Activated CD4-positive, alpha-beta memory T cell treated with anti-CD3 and anti-CD28 coated beads for 36 hours (primary cell): ENCODE measurements at regions of chr10 and their contacts with region 1.

Region 1: DNA sequence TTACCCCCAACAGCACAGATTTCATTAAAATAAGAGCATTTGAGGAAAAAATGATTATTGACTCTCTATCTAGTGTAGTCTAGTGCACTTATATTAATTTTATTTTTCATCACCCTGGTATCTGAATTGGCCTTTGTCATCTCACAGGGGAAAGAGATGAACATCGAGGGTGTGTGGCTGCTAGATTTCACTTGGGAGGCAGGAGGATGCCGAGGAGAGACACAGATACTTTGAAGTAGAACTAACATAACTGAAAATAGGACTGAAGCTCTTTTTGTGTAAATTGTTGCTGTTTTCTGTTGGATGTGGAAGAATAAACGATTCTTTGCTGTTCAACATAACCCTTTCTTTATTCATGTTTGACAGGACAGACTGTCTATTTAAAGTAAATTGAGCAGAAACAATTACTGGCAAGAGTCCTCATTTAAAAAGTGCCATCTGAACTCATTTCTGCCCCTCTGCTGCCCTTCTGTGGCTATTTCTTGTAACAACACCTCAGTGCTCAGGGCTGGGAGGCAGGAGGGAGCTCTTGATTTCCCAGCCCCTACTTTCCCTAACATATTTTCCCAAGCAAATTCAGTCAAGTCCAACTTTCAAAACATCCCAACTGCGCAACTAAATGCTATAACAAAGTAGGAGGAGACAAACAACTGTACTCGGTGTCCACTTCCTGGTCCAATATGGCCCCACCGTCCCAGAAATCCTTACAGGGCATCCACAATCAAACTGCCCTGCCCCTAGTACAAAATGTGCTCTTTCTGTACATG is 15.6 kb downstream of the LYZL1 start:
- DNase-seq: peak; percentile 43
- H3K4me3 Mint-ChIP-seq: no peak overlapping the region
- H3K27ac Mint-ChIP-seq: no peak overlapping the region
- H3K4me1 Mint-ChIP-seq: no peaks in the 10 kb centered on the region
- H3K27me3 Mint-ChIP-seq: peaks cover 21% of the 10 kb centered on the region

Region 2: GRCh38 chr10:28628184-28628893 is 676.1 kb before region 1 on chr10:
- CTCF ChIA-PET with region 1: interaction called, 13 read pairs
- POLR2A ChIA-PET with region 1: no interaction called
- intact Hi-C with region 1: loop called (anchors 1 kb)
- DNase-seq: peak; percentile 80
- H3K4me3 Mint-ChIP-seq: no peak overlapping the region
- H3K27ac Mint-ChIP-seq: no peak overlapping the region
- H3K4me1 Mint-ChIP-seq: peaks cover 4% of the 10 kb centered on the region
- H3K27me3 Mint-ChIP-seq: peaks cover 9% of the 10 kb centered on the region

Region 3: DNA sequence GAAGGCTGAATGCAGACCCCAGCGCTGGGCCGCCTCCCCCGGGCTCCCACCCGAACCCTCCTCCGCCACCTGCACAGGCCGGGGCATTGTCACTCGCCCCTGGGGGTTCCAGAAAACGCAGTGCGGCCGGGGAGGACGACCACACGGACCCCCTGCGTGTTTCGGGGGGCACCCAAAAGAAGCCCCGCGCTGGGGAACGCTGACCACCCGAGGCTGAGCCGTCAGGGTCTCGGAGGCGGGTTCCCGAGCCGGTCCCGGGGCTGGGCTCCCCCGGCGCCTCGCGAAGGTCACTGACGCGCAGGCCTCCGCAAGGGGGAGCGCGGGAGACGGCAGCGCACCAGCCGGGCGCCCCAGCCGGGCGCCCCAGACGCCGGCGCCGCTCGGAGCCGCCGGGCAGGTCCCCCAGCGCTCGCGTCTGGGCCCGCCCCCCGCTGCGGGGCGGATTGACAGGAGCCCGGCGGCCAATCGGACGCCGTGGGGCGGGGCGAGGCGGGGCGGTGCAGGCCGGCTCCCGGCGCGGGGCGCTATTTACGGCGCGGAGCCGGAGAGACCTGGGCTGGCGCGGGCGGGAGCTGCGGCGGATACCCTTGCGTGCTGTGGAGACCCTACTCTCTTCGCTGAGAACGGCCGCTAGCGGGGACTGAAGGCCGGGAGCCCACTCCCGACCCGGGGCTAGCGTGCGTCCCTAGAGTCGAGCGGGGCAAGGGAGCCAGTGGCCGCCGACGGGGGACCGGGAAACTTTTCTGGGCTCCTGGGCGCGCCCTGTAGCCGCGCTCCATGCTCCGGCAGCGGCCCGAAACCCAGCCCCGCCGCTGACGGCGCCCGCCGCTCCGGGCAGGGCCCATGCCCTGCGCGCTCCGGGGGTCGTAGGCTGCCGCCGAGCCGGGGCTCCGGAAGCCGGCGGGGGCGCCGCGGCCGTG is 627.2 kb before region 1 on chr10 and contains the start of gene BAMBI:
- CTCF ChIA-PET with region 1: interaction called, 5 read pairs
- POLR2A ChIA-PET with region 1: no interaction called
- intact Hi-C with region 1: loop called (anchors 5 kb)
- DNase-seq: peak; percentile 91
- H3K4me3 Mint-ChIP-seq: peak within 1 kb of the TSS; percentile 71
- H3K27ac Mint-ChIP-seq: no peak within 1 kb of the TSS
- H3K4me1 Mint-ChIP-seq: peaks cover 26% of the 10 kb centered on the region
- H3K27me3 Mint-ChIP-seq: peaks cover 48% of the 10 kb centered on the region
- total RNA-seq, gene BAMBI: 0.31 to 0.33 TPM

Region 4: GRCh38 chr10:28744069-28744768 is 560.2 kb before region 1 on chr10:
- CTCF ChIA-PET with region 1: no interaction called
- POLR2A ChIA-PET with region 1: no interaction called
- intact Hi-C with region 1: no loop called
- DNase-seq: no peak
- H3K4me3 Mint-ChIP-seq: no peak overlapping the region
- H3K27ac Mint-ChIP-seq: no peak overlapping the region
- H3K4me1 Mint-ChIP-seq: no peaks in the 10 kb centered on the region
- H3K27me3 Mint-ChIP-seq: peaks cover 2% of the 10 kb centered on the region

Region 5: GRCh38 chr10:29370097-29371092 is 65.9 kb after region 1 on chr10:
- CTCF ChIA-PET with region 1: no interaction called
- POLR2A ChIA-PET with region 1: no interaction called
- intact Hi-C with region 1: no loop called
- DNase-seq: no peak
- H3K4me3 Mint-ChIP-seq: no peak overlapping the region
- H3K27ac Mint-ChIP-seq: no peak overlapping the region
- H3K4me1 Mint-ChIP-seq: no peaks in the 10 kb centered on the region
- H3K27me3 Mint-ChIP-seq: peaks cover 21% of the 10 kb centered on the region

Region 6: DNA sequence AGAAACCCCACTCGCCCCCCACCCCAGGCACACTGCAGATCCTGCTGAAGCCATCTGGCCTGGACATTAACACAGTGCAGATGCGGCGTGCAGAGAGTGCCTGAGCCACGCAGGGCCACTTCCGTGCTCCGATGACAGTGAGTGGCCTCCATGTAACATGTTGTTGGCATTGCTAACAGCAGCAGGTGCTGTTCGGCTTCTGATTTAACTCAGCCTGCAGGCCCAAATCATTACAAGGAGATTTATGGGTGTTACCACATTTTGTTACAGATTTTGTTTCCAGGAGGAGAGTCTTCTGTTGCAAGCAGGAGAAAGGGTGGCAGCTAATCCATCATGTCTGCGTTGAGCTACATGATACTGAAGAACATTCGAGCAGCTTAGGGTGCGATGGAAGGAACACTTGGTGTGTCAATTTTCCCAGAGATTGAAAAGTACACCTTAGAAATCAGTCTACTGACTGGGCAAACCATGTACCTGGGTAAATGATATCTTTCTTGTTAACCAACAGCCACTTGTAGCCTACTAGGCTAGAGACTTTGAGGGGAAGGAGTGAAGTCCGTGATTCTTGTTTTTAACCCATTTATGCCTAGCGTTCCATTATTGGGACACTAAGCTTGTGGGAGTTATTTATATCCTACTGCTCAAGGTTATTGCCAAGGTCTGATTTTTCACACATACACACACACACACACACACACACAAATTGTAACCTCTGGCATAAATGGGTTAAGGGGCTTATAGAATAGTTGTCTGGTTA is 665.0 kb after region 1 on chr10:
- CTCF ChIA-PET with region 1: no interaction called
- POLR2A ChIA-PET with region 1: no interaction called
- intact Hi-C with region 1: no loop called
- DNase-seq: no peak
- H3K4me3 Mint-ChIP-seq: no peak overlapping the region
- H3K27ac Mint-ChIP-seq: no peak overlapping the region
- H3K4me1 Mint-ChIP-seq: no peaks in the 10 kb centered on the region
- H3K27me3 Mint-ChIP-seq: peaks cover 7% of the 10 kb centered on the region